H1 (cell line): ENCODE measurements at regions of chr1 and their contacts with region 1.

Region 1: GRCh38 chr1:47997289-47998200 is at the start of gene TRABD2B:
- DNase-seq: peak; percentile 63 to 95
- H3K4me3 ChIP-seq: peak within 1 kb of the TSS; percentile 39 to 86 (median 62)
- H3K27ac ChIP-seq: no peak within 1 kb of the TSS
- H3K4me1 ChIP-seq: peaks cover 5 to 17% (median 13%) of the 10 kb centered on the region in 4 experiments
- H3K27me3 ChIP-seq: peaks cover 0 to 30% (median 25%) of the 10 kb centered on the region in 4 experiments; a peak in 6 of 7 replicates
- CTCF ChIP-seq: peak; percentile 81 to 97 (median 86)
- EP300 ChIP-seq: no peak
- POLR2A ChIP-seq: no peak; a peak in 1 of 3 replicates
- RAD21 ChIP-seq: peak; percentile 79 to 90
- total RNA-seq, gene TRABD2B: 3.4 and 3.5 TPM in 2 replicates

Region 2: GRCh38 chr1:47785561-47786271 is 211.8 kb before region 1 on chr1:
- CTCF ChIA-PET with region 1: interaction called, 11 read pairs
- POLR2A ChIA-PET with region 1: no interaction called
- DNase-seq: peak; percentile 10 to 53
- H3K4me3 ChIP-seq: no peak overlapping the region
- H3K27ac ChIP-seq: no peak overlapping the region
- H3K4me1 ChIP-seq: peaks cover 0 to 3% (median 0%) of the 10 kb centered on the region in 4 experiments; a peak in 3 of 7 replicates
- H3K27me3 ChIP-seq: no peaks in the 10 kb centered on the region
- CTCF ChIP-seq: peak; percentile 74 to 84 (median 75)
- EP300 ChIP-seq: no peak
- POLR2A ChIP-seq: no peak
- RAD21 ChIP-seq: peak; percentile 81 to 88

Region 3: GRCh38 chr1:47986761-47987200 is 10.8 kb before region 1 on chr1:
- CTCF ChIA-PET with region 1: interaction called, 31 read pairs
- POLR2A ChIA-PET with region 1: interaction called, 10 read pairs
- DNase-seq: no peak
- H3K4me3 ChIP-seq: no peak overlapping the region
- H3K27ac ChIP-seq: no peak overlapping the region
- H3K4me1 ChIP-seq: peaks cover 17 to 32% (median 20%) of the 10 kb centered on the region in 4 experiments
- H3K27me3 ChIP-seq: peaks cover 0 to 14% (median 9%) of the 10 kb centered on the region in 4 experiments; a peak in 5 of 7 replicates
- CTCF ChIP-seq: no peak
- EP300 ChIP-seq: no peak
- POLR2A ChIP-seq: no peak
- RAD21 ChIP-seq: no peak

Region 4: GRCh38 chr1:48026275-48026674 is 28.7 kb after region 1 on chr1:
- CTCF ChIA-PET with region 1: interaction called, 10 read pairs
- POLR2A ChIA-PET with region 1: no interaction called
- DNase-seq: no peak
- H3K4me3 ChIP-seq: no peak overlapping the region
- H3K27ac ChIP-seq: no peak overlapping the region
- H3K4me1 ChIP-seq: peaks cover 0 to 10% (median 5%) of the 10 kb centered on the region in 4 experiments; a peak in 4 of 7 replicates
- H3K27me3 ChIP-seq: no peaks in the 10 kb centered on the region
- CTCF ChIP-seq: no peak
- EP300 ChIP-seq: no peak
- POLR2A ChIP-seq: no peak
- RAD21 ChIP-seq: no peak

Region 5: GRCh38 chr1:48048064-48048463 is 50.5 kb after region 1 on chr1:
- CTCF ChIA-PET with region 1: interaction called, 19 read pairs
- POLR2A ChIA-PET with region 1: interaction called, 5 read pairs
- DNase-seq: no peak
- H3K4me3 ChIP-seq: no peak overlapping the region
- H3K27ac ChIP-seq: no peak overlapping the region
- H3K4me1 ChIP-seq: peaks cover 0 to 5% (median 1%) of the 10 kb centered on the region in 4 experiments; a peak in 4 of 7 replicates
- H3K27me3 ChIP-seq: no peaks in the 10 kb centered on the region
- CTCF ChIP-seq: no peak
- EP300 ChIP-seq: no peak
- POLR2A ChIP-seq: no peak
- RAD21 ChIP-seq: no peak

Region 6: GRCh38 chr1:48236716-48237470 is 239.3 kb after region 1 on chr1:
- CTCF ChIA-PET with region 1: interaction called, 10 read pairs
- POLR2A ChIA-PET with region 1: no interaction called
- DNase-seq: peak in 1 of 2 experiments; percentile 52
- H3K4me3 ChIP-seq: no peak overlapping the region
- H3K27ac ChIP-seq: no peak overlapping the region
- H3K4me1 ChIP-seq: no peaks in the 10 kb centered on the region
- H3K27me3 ChIP-seq: no peaks in the 10 kb centered on the region
- CTCF ChIP-seq: peak in 2 of 3 experiments; percentile 66 to 82; a peak in 3 of 4 replicates
- EP300 ChIP-seq: no peak
- POLR2A ChIP-seq: no peak
- RAD21 ChIP-seq: peak; percentile 89 to 92